WTC11 (cell line): ENCODE measurements at regions of chr20 and their contacts with region 1.

Region 1: DNA sequence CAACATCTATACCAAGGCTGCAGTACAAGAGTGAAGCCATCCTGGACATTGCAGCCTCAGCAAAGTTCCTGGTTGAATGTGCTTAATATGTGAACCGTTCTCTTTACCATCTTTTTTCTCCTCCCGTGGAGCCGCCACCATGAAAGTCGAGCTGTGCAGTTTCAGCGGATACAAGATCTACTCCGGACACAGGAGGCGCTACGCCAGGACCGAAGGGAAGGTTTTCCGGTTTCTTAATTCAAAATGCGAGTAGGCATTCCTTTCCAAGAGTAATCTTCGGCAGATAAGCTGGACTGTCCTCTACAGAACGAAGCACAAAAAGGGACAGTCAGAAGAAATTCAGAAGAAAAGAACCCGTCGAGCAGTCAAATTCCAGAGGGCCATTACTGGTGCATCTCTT is 8.4 kb upstream of the LINC00237 start:
- DNase-seq: no peak
- ATAC-seq: peak; percentile 61; the same call in 1 of the 2 replicates
- H3K4me3 Mint-ChIP-seq: no peak overlapping the region
- H3K27ac Mint-ChIP-seq: no peak overlapping the region; the same call in 1 of the 2 replicates
- H3K4me1 Mint-ChIP-seq: peaks cover 16% of the 10 kb centered on the region
- H3K27me3 Mint-ChIP-seq: no peaks in the 10 kb centered on the region; the same call in 1 of the 2 replicates
- CTCF ChIP-seq: no peak

Region 2: GRCh38 chr20:21074605-21075336 is 39.8 kb before region 1 on chr20:
- CTCF ChIA-PET with region 1: no interaction called
- POLR2A ChIA-PET with region 1: no interaction called
- DNase-seq: no peak
- ATAC-seq: no peak
- H3K4me3 Mint-ChIP-seq: no peak overlapping the region
- H3K27ac Mint-ChIP-seq: no peak overlapping the region
- H3K4me1 Mint-ChIP-seq: peaks cover 5% of the 10 kb centered on the region
- H3K27me3 Mint-ChIP-seq: no peaks in the 10 kb centered on the region; the same call in 1 of the 2 replicates
- CTCF ChIP-seq: no peak

Region 3: GRCh38 chr20:21099751-21100577 is 14.6 kb before region 1 on chr20:
- CTCF ChIA-PET with region 1: interaction called, 17 read pairs
- POLR2A ChIA-PET with region 1: interaction called, 5 read pairs
- DNase-seq: peak; percentile 60
- ATAC-seq: no peak
- H3K4me3 Mint-ChIP-seq: peak overlapping the region; percentile 87
- H3K27ac Mint-ChIP-seq: peak overlapping the region; percentile 95
- H3K4me1 Mint-ChIP-seq: peaks cover 55% of the 10 kb centered on the region
- H3K27me3 Mint-ChIP-seq: peaks cover 85% of the 10 kb centered on the region
- CTCF ChIP-seq: no peak

Region 4: DNA sequence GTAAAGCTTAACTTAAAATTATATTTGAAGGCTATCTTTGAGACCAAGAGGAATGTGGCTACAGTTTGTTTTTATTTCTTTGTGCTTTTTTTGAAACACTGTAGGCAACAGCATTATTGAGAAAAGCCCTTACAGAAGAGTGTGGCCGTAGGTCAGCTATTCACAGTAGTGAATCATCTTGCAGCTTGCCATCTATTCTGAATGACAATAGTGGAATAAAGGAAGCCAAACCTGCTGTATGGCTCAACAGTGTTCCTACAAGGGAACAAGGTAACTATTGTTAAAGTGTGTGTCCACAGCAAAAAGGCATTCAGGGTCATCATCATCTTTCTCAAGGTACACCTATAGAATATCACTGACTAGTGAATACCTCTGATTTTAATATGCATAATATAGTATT is 99.8 kb after region 1 on chr20:
- CTCF ChIA-PET with region 1: no interaction called
- POLR2A ChIA-PET with region 1: no interaction called
- DNase-seq: no peak
- ATAC-seq: peak; percentile 93
- H3K4me3 Mint-ChIP-seq: no peak overlapping the region
- H3K27ac Mint-ChIP-seq: no peak overlapping the region
- H3K4me1 Mint-ChIP-seq: peaks cover 75% of the 10 kb centered on the region
- H3K27me3 Mint-ChIP-seq: no peaks in the 10 kb centered on the region
- CTCF ChIP-seq: no peak